Activated CD8-positive, alpha-beta T cell treated with anti-CD3 and anti-CD28 coated beads, Interleukin-2, amount 10 ng/mL, durations not matched to agents 7 days and 5 days (primary cell): ENCODE measurements at regions of chr10 and their contacts with region 1.

Region 1: GRCh38 chr10:72223743-72224101 is 7.6 kb upstream of the ASCC1 start:
- DNase-seq: no peak
- ATAC-seq: peak; percentile 22
- H3K4me3 Mint-ChIP-seq: peak overlapping the region; percentile 24
- H3K27ac Mint-ChIP-seq: peak overlapping the region; percentile 65
- H3K4me1 Mint-ChIP-seq: peaks cover 51% of the 10 kb centered on the region
- H3K27me3 Mint-ChIP-seq: no peaks in the 10 kb centered on the region

Region 2: DNA sequence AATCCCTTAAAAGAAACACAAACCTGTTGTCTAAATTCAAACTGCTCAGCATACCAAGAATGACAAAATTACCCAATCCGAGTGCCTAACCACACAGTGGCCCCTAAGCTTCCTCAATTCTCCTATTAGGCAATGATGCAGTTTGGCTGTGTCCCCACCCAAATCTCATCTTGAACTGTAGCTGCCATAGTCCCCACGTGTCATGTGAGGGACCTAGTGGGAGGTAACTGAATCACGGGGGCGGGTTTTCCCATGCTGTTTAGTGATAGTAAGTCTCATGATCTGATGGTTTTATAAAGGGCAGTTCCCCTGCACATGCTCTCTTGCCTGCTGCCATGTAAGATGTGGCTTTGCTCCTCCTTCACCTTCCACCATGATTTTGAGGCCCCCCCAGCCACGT is 394.6 kb before region 1 on chr10:
- CTCF ChIA-PET with region 1: no interaction called
- POLR2A ChIA-PET with region 1: no interaction called
- DNase-seq: no peak
- ATAC-seq: no peak
- H3K4me3 Mint-ChIP-seq: no peak overlapping the region
- H3K27ac Mint-ChIP-seq: no peak overlapping the region
- H3K4me1 Mint-ChIP-seq: peaks cover 11% of the 10 kb centered on the region
- H3K27me3 Mint-ChIP-seq: no peaks in the 10 kb centered on the region

Region 3: DNA sequence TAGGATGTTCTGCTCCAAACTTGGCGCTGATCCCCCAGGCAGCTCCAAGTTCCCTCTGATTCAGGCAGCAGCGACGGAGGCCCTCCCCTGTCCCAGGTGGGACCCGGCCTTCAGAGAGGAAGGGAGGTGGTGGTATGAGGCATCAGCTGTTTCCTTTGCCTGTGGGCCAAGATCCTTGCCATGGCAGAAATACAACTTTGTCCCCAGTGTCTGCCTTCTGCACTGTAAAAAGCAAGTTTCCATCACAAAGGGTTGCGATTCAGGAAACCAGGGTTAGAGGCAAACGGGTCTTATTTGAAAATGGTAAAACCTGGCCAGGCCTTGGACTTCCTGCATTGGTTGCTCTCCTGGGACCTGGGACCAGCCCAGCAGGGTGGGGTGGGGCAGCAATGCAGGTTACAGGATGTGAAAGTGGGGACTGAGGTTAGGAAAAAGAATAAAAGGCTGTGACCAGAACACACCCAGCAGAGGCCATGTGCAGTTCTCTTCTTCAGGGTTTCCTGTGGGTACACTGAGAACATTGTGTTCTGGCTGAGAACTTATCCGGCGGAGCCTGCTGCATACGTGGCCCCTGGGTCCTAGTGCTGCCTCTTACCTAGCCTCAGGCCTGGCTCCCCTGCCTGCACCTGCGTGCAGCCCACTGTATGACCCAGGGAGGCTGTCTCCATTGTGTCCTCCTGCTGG is 24.9 kb after region 1 on chr10:
- CTCF ChIA-PET with region 1: interaction called, 18 read pairs
- POLR2A ChIA-PET with region 1: interaction called, 9 read pairs
- DNase-seq: peak; percentile 91
- ATAC-seq: peak; percentile 88
- H3K4me3 Mint-ChIP-seq: peak overlapping the region; percentile 80
- H3K27ac Mint-ChIP-seq: peak overlapping the region; percentile 95
- H3K4me1 Mint-ChIP-seq: peaks cover 85% of the 10 kb centered on the region
- H3K27me3 Mint-ChIP-seq: no peaks in the 10 kb centered on the region

Region 4: DNA sequence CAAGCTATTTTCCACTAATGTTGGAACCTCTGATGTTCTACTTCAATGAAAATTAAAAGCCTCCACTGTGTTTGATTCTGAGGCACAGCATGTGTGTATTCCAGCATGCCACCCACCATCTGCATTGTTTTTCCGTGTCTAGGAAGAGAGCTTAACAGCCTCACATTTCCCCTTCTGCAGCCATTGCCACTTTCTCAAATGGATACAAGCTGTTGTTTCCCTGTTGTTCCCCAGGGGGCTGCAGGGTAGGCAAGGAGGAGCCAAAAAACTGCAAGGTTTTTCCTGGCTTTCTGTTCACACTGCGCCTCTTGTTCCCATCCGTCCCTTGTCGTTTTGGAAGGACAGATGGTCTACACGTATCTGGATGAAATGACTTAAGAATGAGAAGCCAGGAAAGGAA is 203.3 kb after region 1 on chr10:
- CTCF ChIA-PET with region 1: no interaction called
- POLR2A ChIA-PET with region 1: no interaction called
- DNase-seq: no peak
- ATAC-seq: no peak
- H3K4me3 Mint-ChIP-seq: no peak overlapping the region
- H3K27ac Mint-ChIP-seq: no peak overlapping the region
- H3K4me1 Mint-ChIP-seq: peaks cover 3% of the 10 kb centered on the region
- H3K27me3 Mint-ChIP-seq: no peaks in the 10 kb centered on the region